ENCODE measurements at regions of chr14 and their contacts with region 1.

Region 1: DNA sequence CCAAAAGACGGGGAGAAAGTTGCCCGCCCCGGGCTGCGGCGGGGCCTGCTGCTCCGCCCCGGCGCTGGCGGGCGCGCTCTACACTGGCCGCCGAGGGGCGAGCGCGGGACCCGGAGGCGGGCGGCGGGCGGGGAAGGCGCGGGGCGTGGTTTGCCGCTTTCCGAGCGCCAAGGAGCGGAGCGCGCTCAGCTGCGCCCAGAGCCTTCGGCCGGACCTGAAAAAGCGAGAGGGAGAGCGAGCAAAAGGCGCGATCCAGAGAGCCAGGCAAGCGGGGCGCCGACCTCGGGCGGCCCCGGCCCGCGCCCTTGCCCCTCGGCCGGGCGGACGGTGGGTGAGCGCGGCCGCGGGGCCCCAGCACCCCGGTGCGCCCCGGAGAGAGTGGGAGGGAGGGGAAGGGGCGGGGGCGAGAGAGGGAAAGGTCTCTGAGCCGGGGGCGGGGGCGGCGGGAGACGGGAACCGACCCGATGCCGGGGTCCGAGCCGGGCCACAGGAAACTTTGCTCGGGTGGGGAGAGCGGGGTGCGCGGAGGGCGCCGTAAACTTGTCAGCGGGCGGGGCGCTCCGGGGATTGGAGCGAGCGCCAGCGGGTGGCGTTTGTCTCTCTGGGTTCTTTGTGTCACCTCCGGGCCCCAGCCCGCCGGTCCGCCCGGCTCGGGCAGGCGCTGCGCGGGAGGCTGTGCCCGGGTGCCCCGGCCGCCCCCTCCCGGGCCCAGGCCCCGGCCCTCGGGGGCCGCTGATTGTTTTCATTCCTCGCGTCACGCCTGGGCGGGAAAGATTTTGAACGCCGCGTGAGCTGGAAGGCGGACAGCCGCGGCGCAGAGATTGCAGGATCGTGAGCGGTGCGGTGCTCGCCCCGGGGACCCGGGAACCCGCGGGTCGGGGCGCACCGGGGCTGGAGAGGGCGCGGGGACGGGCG is at the start of gene SYNE2:
- DNase-seq: peak; percentile 84
- H3K4me3 ChIP-seq: peak within 1 kb of the TSS; percentile 85 to 87 (median 86)
- H3K27ac ChIP-seq: peak within 1 kb of the TSS; percentile 90 to 92 (median 91)
- H3K4me1 ChIP-seq: peaks cover 0 to 12% (median 8%) of the 10 kb centered on the region in 4 donors
- H3K27me3 ChIP-seq: no peaks in the 10 kb centered on the region
- CTCF ChIP-seq: peak in 1 of 4 experiments; percentile 30
- EP300 ChIP-seq: no peak
- POLR2A ChIP-seq: no peak
- total RNA-seq, gene SYNE2: 40.7 to 70.6 (median 56.2) TPM

Region 2: GRCh38 chr14:63437953-63438757 is 414.9 kb before region 1 on chr14:
- intact Hi-C with region 1: no loop called
- DNase-seq: peak; percentile 85
- H3K4me3 ChIP-seq: peak overlapping the region in 1 of 4 donors; percentile 30
- H3K27ac ChIP-seq: peak overlapping the region; percentile 69 to 81 (median 79)
- H3K4me1 ChIP-seq: peaks cover 0 to 71% (median 55%) of the 10 kb centered on the region in 4 donors
- H3K27me3 ChIP-seq: no peaks in the 10 kb centered on the region
- CTCF ChIP-seq: peak in 3 of 4 experiments; percentile 12 to 14 (median 12)
- EP300 ChIP-seq: peak in 2 of 4 donors; percentile 8 to 30
- POLR2A ChIP-seq: no peak

Region 3: DNA sequence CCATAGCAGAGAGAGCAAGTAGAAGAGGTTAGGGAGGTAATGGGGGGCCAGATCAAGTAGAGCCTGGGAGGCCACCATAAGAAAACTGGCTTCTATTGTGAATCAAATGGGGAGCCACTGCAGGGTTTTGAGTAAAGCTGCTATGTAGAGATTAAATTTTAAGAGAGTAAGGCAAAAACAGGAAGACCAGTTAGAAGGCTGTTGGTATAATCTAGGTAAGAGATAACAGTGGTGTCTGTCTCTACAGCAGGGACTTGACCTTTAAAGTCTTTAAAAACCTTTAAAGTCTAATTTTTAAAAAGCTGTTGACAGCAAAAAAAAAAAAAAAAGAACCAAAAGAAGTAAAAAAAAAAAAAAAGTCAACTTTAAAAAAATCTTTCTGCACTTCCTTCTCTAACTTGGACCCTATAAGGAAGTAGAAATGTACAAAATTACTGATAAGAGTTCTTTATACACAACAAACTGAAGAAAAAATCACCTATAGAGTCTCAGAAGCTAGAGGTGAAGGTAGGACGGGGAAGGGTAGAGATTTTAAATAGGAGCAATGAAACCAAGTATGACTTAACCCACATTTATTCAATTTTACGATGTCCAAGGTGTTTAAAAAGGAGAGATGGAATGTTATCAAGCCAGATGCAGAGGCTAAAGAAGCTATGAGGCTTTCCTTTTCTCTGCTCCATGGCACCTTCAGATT is 151.3 kb before region 1 on chr14:
- intact Hi-C with region 1: no loop called
- DNase-seq: no peak
- H3K4me3 ChIP-seq: no peak overlapping the region
- H3K27ac ChIP-seq: no peak overlapping the region
- H3K4me1 ChIP-seq: no peaks in the 10 kb centered on the region
- H3K27me3 ChIP-seq: no peaks in the 10 kb centered on the region
- CTCF ChIP-seq: no peak
- EP300 ChIP-seq: no peak
- POLR2A ChIP-seq: no peak

Region 4: DNA sequence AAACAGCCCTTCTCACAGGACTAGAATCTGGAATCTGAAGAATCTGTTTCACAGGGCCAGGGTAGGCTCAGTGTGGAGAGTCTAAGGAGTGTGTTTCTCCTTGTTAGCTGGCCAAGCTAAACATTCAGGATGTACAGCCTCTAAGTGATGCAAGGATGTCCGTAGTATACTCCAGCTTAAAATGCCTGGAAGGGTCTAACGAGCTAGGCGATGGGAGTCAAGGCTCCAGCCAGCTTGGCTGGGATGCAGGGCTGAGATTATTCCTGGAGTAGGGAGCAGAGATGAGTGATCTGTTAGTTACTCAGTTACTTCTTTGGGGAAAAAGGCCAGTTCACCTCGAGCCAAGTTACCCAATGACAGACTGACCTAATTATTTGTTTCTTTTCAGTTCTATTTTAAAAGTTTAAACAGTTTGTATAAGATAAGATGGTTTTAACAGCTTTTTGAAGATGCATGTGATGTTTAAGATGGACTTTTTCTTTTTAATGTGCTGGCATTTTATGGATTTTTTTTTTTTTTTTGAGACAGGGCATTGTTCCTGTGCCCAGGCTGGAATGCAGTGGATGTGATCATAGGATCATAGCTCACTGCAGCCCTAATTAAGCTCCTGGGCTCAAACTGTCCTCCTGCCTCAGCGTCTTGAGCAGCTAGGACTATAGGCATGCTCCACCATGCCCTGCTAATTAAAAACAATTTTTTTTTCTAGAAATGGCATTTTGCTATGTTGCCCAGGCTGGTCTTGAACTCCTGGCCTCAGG is 40.8 kb after region 1 on chr14:
- intact Hi-C with region 1: loop called (anchors 5 kb)
- DNase-seq: peak; percentile 86
- H3K4me3 ChIP-seq: no peak overlapping the region
- H3K27ac ChIP-seq: peak overlapping the region; percentile 54 to 81 (median 73)
- H3K4me1 ChIP-seq: peaks cover 0 to 64% (median 51%) of the 10 kb centered on the region in 4 donors
- H3K27me3 ChIP-seq: no peaks in the 10 kb centered on the region
- CTCF ChIP-seq: no peak
- EP300 ChIP-seq: peak in 1 of 4 donors; percentile 23
- POLR2A ChIP-seq: no peak

Region 5: GRCh38 chr14:63972323-63972932 is 119.4 kb after region 1 on chr14:
- intact Hi-C with region 1: loop called (anchors 5 kb)
- DNase-seq: no peak
- H3K4me3 ChIP-seq: no peak overlapping the region
- H3K27ac ChIP-seq: no peak overlapping the region
- H3K4me1 ChIP-seq: peaks cover 0 to 12% (median 10%) of the 10 kb centered on the region in 4 donors
- H3K27me3 ChIP-seq: no peaks in the 10 kb centered on the region
- CTCF ChIP-seq: no peak
- EP300 ChIP-seq: no peak
- POLR2A ChIP-seq: no peak

Region 6: GRCh38 chr14:63993992-63994391 is 140.9 kb after region 1 on chr14:
- intact Hi-C with region 1: loop called (anchors 5 kb)
- DNase-seq: no peak
- H3K4me3 ChIP-seq: no peak overlapping the region
- H3K27ac ChIP-seq: no peak overlapping the region
- H3K4me1 ChIP-seq: no peaks in the 10 kb centered on the region
- H3K27me3 ChIP-seq: no peaks in the 10 kb centered on the region
- CTCF ChIP-seq: peak in 1 of 4 experiments; percentile 18
- EP300 ChIP-seq: no peak
- POLR2A ChIP-seq: no peak

Region 7: GRCh38 chr14:64117671-64118402 is 264.8 kb after region 1 on chr14:
- intact Hi-C with region 1: no loop called
- DNase-seq: no peak
- H3K4me3 ChIP-seq: no peak overlapping the region
- H3K27ac ChIP-seq: peak overlapping the region in 1 of 4 donors; percentile 64
- H3K4me1 ChIP-seq: no peaks in the 10 kb centered on the region
- H3K27me3 ChIP-seq: no peaks in the 10 kb centered on the region
- CTCF ChIP-seq: no peak
- EP300 ChIP-seq: no peak
- POLR2A ChIP-seq: no peak